ENCODE measurements at regions of chr19 and their contacts with region 1.

Region 1: GRCh38 chr19:19776041-19777008 is 43.4 kb upstream of the ZNF14 start:
- DNase-seq: peak; percentile 99
- H3K4me3 ChIP-seq: peak overlapping the region; percentile 20 to 76 (median 61)
- H3K27ac ChIP-seq: peak overlapping the region; percentile 39 to 74 (median 59)
- H3K4me1 ChIP-seq: peaks cover 16 to 19% of the 10 kb centered on the region in 2 donors
- H3K27me3 ChIP-seq: no peaks in the 10 kb centered on the region
- CTCF ChIP-seq: peak in 2 of 6 experiments; percentile 10
- POLR2A ChIP-seq: peak in 1 of 2 donors; percentile 82

Region 2: GRCh38 chr19:19821366-19821951 is 45.1 kb after region 1 on chr19 and contains the start of gene ZNF506:
- intact Hi-C with region 1: loop called (anchors 2 kb)
- DNase-seq: peak; percentile 100
- H3K4me3 ChIP-seq: peak within 1 kb of the TSS; percentile 59 to 92 (median 74)
- H3K27ac ChIP-seq: peak within 1 kb of the TSS; percentile 82 to 90 (median 87)
- H3K4me1 ChIP-seq: peaks cover 28 to 37% of the 10 kb centered on the region in 2 donors
- H3K27me3 ChIP-seq: no peaks in the 10 kb centered on the region
- CTCF ChIP-seq: no peak
- POLR2A ChIP-seq: peak in 1 of 2 donors; percentile 96
- total RNA-seq, gene ZNF506: 57.9 to 112 (median 76.5) TPM

Region 3: GRCh38 chr19:19943848-19944582 is 167.7 kb after region 1 on chr19:
- intact Hi-C with region 1: no loop called
- DNase-seq: no peak
- H3K4me3 ChIP-seq: no peak overlapping the region
- H3K27ac ChIP-seq: no peak overlapping the region
- H3K4me1 ChIP-seq: peaks cover 12 to 29% of the 10 kb centered on the region in 2 donors
- H3K27me3 ChIP-seq: no peaks in the 10 kb centered on the region
- CTCF ChIP-seq: no peak
- POLR2A ChIP-seq: no peak

Region 4: GRCh38 chr19:20067943-20068342 is 291.6 kb after region 1 on chr19:
- intact Hi-C with region 1: no loop called
- DNase-seq: no peak
- H3K4me3 ChIP-seq: no peak overlapping the region
- H3K27ac ChIP-seq: no peak overlapping the region
- H3K4me1 ChIP-seq: peaks cover 16 to 36% of the 10 kb centered on the region in 2 donors
- H3K27me3 ChIP-seq: no peaks in the 10 kb centered on the region
- CTCF ChIP-seq: no peak
- POLR2A ChIP-seq: no peak